Sigmoid colon (tissue), 7 donors: ENCODE measurements at regions of chr16 and their contacts with region 1.

Region 1: DNA sequence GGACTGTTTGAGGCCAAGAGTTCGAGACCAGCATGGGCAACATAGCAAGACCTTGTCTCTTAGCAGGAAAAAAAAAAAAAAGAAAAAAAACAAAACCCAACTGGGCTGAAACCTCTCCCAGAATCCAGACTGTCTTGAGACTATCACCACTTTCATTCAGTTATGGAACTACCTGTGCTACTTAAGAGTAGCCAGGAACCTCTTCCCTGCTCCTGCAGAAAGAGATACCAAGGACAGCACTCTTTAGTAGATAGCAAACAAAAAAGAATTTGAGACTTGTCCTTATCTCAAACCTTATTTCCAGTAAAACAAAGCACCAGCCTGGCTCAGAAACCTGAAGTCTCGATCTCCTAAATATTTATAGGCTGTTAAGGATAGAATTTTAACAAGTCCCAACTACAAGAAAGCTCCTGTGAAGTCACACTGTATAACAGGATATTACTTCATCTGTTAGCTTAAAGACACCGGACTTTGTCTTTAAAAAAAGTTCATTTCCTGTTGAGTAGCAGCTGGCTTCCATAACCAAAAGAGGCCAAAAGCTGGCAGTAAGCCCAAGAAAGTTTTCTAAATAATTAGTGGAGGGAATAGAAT is 5.1 kb downstream of the CDR2 start:
- DNase-seq: no peak
- H3K4me3 ChIP-seq: no peak overlapping the region
- H3K27ac ChIP-seq: peak overlapping the region; percentile 91 to 95 (median 94)
- H3K4me1 ChIP-seq: peaks cover 0 to 80% (median 73%) of the 10 kb centered on the region in 4 donors
- H3K27me3 ChIP-seq: no peaks in the 10 kb centered on the region
- CTCF ChIP-seq: no peak
- EP300 ChIP-seq: no peak
- POLR2A ChIP-seq: no peak

Region 2: DNA sequence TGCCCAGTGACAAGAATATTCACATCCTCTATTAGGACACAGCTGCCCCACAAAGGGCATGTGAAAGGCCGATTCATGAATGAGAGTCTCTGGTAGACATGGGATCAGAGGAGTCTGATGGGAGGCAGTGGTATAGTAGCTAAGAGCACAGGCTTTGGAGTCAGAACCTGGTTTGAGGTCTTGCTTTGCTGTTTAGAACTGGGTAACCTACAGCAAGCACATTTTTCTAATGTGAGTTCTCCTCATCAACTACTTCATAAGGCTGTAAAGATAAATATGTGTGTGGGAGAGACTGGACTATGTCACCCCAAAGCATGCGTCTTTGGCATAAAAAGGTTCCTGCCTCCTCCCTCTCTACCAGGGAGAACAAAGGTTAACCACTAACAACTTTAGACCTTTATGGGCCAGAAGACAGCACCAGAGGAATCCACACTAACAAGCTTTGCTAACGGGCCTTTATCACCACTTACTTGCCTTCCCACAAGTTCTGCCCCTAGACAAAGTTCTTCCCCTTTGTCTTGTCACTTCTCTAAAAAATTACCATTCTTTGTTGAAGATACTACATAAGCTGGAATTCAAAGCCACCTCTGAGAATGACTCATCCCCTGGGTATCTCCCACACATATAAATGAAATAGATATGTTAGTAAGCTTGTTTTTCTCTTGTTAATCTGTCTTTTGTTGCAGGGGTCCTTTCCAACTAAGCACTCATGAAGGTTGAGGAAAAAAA is 16.0 kb before region 1 on chr16:
- intact Hi-C with region 1: loop called (anchors 2 kb)
- DNase-seq: no peak
- H3K4me3 ChIP-seq: no peak overlapping the region
- H3K27ac ChIP-seq: peak overlapping the region; percentile 15 to 78 (median 66)
- H3K4me1 ChIP-seq: peaks cover 0 to 38% (median 24%) of the 10 kb centered on the region in 4 donors
- H3K27me3 ChIP-seq: no peaks in the 10 kb centered on the region
- CTCF ChIP-seq: no peak
- EP300 ChIP-seq: peak in 1 of 4 donors; percentile 26
- POLR2A ChIP-seq: no peak

Region 3: DNA sequence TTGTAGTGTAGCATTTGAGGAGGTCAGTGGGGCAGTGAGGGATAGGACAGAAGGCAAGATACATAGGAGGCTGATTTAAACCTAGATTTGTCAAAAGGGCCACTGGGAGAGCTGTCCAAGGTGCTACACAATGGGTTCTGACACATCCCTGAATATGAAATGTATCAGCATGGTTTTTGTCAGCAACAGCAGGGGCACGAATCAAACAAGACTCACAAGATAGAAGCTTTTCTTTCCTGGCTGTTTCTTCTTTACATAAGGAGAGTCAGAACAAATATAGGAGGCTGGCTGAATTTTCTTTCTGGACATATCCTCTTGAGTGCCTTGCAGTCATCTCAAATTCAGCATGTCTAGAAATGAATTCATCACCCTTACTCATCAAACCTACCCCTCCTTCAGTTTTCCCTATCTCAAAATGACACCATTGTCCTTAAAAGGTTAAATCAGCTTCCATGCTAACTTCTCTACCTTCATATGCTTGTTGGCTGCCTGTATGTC is 271.9 kb after region 1 on chr16:
- intact Hi-C with region 1: no loop called
- DNase-seq: no peak
- H3K4me3 ChIP-seq: no peak overlapping the region
- H3K27ac ChIP-seq: no peak overlapping the region
- H3K4me1 ChIP-seq: no peaks in the 10 kb centered on the region
- H3K27me3 ChIP-seq: peaks cover 0 to 7% (median 0%) of the 10 kb centered on the region in 3 donors
- CTCF ChIP-seq: no peak
- EP300 ChIP-seq: no peak
- POLR2A ChIP-seq: no peak